ENCODE measurements at regions of chr3 and their contacts with region 1.

Region 1: GRCh38 chr3:53347261-53348064 is at the start of gene DCP1A:
- DNase-seq: peak; percentile 98
- H3K4me3 ChIP-seq: peak within 1 kb of the TSS; percentile 94
- CTCF ChIP-seq: no peak

Region 2: DNA sequence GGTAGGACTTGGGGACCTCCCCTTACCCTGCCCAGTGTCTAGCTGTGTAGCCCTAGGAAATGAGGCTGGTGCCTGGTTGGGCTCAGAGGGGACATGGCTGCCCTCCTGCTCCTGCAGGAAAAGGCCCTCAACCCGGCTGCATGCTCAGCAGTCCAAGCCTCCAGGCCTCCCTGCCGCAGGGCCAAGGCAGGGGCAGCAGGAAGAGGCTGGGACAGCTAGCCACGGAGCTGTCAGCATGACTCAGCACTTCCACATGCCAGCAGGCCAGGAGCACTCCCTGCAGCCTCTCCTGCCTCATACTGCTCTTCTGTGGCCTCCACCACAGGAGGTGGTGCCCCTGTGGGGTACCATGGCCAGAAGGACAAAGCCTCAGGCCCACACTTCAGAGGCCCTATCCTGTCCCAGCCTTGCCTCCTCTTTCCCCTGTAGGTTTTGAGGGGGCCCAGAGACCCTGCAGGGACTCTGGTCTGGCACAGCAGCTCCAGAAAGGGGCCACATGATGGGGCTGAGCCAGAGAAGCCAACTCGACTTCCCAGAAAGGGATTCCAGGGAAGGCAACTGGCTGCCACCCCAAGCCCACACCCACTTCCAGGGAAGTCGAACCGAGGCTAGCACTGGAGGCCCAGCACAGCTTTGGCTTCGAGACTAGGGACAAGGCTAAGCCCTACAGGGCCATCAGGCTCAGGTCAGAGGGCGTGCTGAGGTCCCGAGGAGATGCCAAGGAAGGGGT is 111.2 kb before region 1 on chr3:
- in situ Hi-C with region 1: loop called (anchors 10 kb)
- DNase-seq: peak; percentile 88
- H3K4me3 ChIP-seq: no peak overlapping the region
- CTCF ChIP-seq: no peak

Region 3: GRCh38 chr3:53531749-53532148 is 184.3 kb after region 1 on chr3:
- in situ Hi-C with region 1: no loop called
- DNase-seq: no peak
- H3K4me3 ChIP-seq: no peak overlapping the region
- CTCF ChIP-seq: no peak

Measured in astrocyte of the spinal cord (primary cell).